Mammary epithelial cell (primary cell): ENCODE measurements at regions of chr1 and their contacts with region 1.

Region 1: DNA sequence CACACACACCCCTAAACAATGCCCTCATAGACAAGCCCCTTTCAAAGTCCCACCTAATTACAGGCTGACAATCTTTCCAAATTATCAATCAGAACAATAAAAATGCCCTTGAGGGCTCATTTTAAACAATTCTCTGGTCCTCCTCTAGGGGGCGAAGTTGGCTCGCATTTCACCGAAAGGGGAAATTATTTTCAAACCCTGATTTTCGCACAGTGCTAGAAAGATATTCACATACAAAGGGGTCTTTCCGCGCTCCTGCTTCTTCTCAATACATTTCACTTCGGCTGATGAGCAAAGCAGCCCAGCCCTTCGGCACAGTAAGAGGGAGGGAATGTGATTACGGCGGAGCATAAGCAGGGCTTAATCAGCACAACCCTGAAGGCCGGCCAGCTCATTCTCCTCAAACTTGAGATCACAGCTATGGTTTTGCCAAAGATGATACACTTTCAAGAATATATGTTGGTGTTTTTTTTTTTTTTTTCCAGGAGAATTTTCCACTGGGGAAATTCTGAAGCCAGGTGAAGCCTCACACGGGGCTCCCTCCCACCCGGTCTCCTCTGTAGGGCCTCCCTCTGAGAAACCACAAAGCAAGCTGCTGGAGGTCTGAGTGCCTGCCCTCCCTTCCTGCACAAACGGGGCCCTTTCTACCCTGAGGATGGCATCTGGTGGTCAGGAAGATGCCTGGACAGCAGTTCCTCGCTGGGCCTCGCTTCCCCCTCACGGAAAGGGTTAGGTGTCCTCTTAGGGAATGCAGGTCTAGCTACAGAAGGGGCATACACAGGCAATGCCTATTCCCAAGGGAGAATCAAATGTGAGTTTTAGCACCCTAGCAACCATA is 66.9 kb downstream of the GNG12 start:
- DNase-seq: peak; percentile 70
- H3K4me3 ChIP-seq: no peak overlapping the region
- H3K27ac ChIP-seq: peak overlapping the region; percentile 65
- H3K4me1 ChIP-seq: peaks cover 26% of the 10 kb centered on the region
- H3K27me3 ChIP-seq: no peaks in the 10 kb centered on the region
- CTCF ChIP-seq: peak; percentile 65 to 68

Region 2: GRCh38 chr1:67590329-67590728 is 176.0 kb before region 1 on chr1:
- CTCF ChIA-PET with region 1: no interaction called
- dilution Hi-C with region 1: no loop called
- in situ Hi-C with region 1: no loop called
- intact Hi-C with region 1: no loop called
- DNase-seq: no peak
- H3K4me3 ChIP-seq: no peak overlapping the region
- H3K27ac ChIP-seq: no peak overlapping the region
- H3K4me1 ChIP-seq: no peaks in the 10 kb centered on the region
- H3K27me3 ChIP-seq: no peaks in the 10 kb centered on the region
- CTCF ChIP-seq: no peak

Region 3: GRCh38 chr1:67815303-67816094 is 49.1 kb after region 1 on chr1:
- CTCF ChIA-PET with region 1: no interaction called
- dilution Hi-C with region 1: loop called (anchors 5 kb)
- in situ Hi-C with region 1: no loop called
- intact Hi-C with region 1: no loop called
- DNase-seq: peak; percentile 62
- H3K4me3 ChIP-seq: peak overlapping the region in 2 of 3 experiments; percentile 15 to 28
- H3K27ac ChIP-seq: peak overlapping the region; percentile 70
- H3K4me1 ChIP-seq: peaks cover 49% of the 10 kb centered on the region
- H3K27me3 ChIP-seq: no peaks in the 10 kb centered on the region
- CTCF ChIP-seq: no peak

Region 4: GRCh38 chr1:67832737-67833601 is 66.6 kb after region 1 on chr1 and contains the start of gene GNG12:
- CTCF ChIA-PET with region 1: interaction called, 5 read pairs
- dilution Hi-C with region 1: no loop called
- in situ Hi-C with region 1: loop called in 1 of 2 experiments (anchors 5 kb)
- intact Hi-C with region 1: loop called (anchors 1 kb)
- DNase-seq: peak; percentile 77
- H3K4me3 ChIP-seq: peak within 1 kb of the TSS; percentile 72 to 92 (median 90)
- H3K27ac ChIP-seq: peak within 1 kb of the TSS; percentile 90
- H3K4me1 ChIP-seq: peaks cover 54% of the 10 kb centered on the region
- H3K27me3 ChIP-seq: no peaks in the 10 kb centered on the region
- CTCF ChIP-seq: no peak
- total RNA-seq, gene GNG12: 130 to 183 TPM

Region 5: DNA sequence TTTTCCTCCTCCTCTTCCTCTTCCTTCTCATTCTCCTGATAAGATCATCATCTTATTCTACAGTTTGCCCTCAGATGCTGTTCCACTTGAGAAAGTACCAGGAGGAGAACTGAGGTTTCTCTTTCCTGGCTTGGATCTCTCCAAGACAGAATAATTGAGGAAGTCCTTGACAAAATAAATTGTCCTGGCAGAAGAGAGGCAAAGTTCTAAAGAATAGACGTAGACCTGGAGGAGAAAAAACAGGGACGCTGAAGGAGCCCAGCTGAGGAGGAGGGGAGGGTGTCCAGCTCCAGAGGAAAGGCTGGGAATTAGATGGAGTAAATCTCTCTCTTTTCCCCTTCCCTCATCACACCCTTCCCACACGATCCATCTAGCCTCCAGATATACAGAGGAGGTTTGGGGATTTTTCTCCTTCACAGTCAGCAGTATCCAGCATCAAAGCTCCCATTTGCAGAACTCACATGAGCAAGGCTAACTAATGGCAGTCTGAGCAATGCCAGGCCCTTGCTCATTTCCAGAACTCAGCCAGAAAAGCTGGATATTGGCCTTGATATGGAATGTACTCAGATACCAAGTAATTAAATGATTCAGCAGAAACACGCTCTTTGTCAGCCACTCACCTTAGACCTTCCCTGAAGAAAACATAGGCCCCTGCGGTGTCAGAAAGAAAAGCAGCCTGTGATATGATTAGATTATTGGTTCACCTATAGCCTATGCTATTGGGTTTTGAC is 72.0 kb after region 1 on chr1:
- CTCF ChIA-PET with region 1: interaction called, 5 read pairs
- dilution Hi-C with region 1: no loop called
- in situ Hi-C with region 1: loop called in 1 of 2 experiments (anchors 5 kb)
- intact Hi-C with region 1: no loop called
- DNase-seq: peak; percentile 52
- H3K4me3 ChIP-seq: no peak overlapping the region
- H3K27ac ChIP-seq: peak overlapping the region; percentile 10
- H3K4me1 ChIP-seq: peaks cover 73% of the 10 kb centered on the region
- H3K27me3 ChIP-seq: no peaks in the 10 kb centered on the region
- CTCF ChIP-seq: no peak

Region 6: GRCh38 chr1:68010090-68010489 is 243.7 kb after region 1 on chr1:
- CTCF ChIA-PET with region 1: no interaction called
- dilution Hi-C with region 1: no loop called
- in situ Hi-C with region 1: no loop called
- intact Hi-C with region 1: loop called (anchors 1 kb)
- DNase-seq: peak; percentile 17
- H3K4me3 ChIP-seq: no peak overlapping the region
- H3K27ac ChIP-seq: no peak overlapping the region
- H3K4me1 ChIP-seq: no peaks in the 10 kb centered on the region
- H3K27me3 ChIP-seq: no peaks in the 10 kb centered on the region
- CTCF ChIP-seq: peak; percentile 36 to 54

Region 7: GRCh38 chr1:68111519-68112436 is 345.4 kb after region 1 on chr1:
- CTCF ChIA-PET with region 1: no interaction called
- dilution Hi-C with region 1: no loop called
- in situ Hi-C with region 1: no loop called
- intact Hi-C with region 1: loop called (anchors 1 kb)
- DNase-seq: peak; percentile 63
- H3K4me3 ChIP-seq: no peak overlapping the region
- H3K27ac ChIP-seq: no peak overlapping the region
- H3K4me1 ChIP-seq: peaks cover 27% of the 10 kb centered on the region
- H3K27me3 ChIP-seq: no peaks in the 10 kb centered on the region
- CTCF ChIP-seq: peak; percentile 64 to 75